ENCODE measurements at regions of chr7 and their contacts with region 1.

Region 1: GRCh38 chr7:636396-636795 is 90.1 kb upstream of the DNAAF5 start:
- DNase-seq: peak in 1 of 2 donors; percentile 26
- ATAC-seq: peak in 5 of 8 donors; percentile 53 to 70 (median 59)
- H3K4me3 ChIP-seq: no peak overlapping the region
- H3K27ac ChIP-seq: no peak overlapping the region
- H3K4me1 ChIP-seq: no peaks in the 10 kb centered on the region
- H3K27me3 ChIP-seq: no peaks in the 10 kb centered on the region
- CTCF ChIP-seq: peak in 8 of 9 donors; percentile 20 to 60 (median 51)

Region 2: DNA sequence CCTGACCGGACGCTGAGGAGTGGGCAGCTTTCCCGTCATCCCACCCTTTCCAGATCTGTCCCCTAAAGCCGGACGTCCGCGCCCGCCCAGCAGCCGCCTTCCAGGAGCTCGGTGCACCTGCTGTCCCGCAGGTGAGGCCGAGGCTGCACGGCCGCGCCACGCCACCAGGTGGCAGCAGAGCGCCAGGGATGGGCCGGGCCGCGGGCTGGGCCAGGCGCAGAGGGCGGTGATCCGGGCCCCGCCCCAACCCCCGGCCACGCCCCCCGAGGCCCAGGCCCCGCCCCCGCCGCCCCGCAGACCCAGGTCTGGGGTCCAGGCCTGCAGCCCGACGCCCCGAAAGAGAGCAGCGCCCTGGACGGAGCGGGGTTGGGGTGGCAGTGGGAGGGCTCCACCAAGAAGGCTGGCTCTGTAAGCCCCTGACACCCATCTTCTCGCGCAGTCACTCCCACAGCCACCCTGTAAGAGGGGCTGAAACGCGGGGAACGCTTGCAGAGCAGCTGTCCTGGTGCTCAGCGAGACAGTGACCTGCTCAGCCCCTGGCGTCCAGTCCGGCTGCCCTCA is 314.2 kb before region 1 on chr7:
- intact Hi-C with region 1: loop called in 2 of 10 experiments (anchors 5 kb)
- DNase-seq: peak; percentile 48 to 79
- ATAC-seq: peak; percentile 65 to 90 (median 80)
- H3K4me3 ChIP-seq: peak overlapping the region in 1 of 10 donors; percentile 20
- H3K27ac ChIP-seq: no peak overlapping the region
- H3K4me1 ChIP-seq: peaks cover 0 to 33% (median 5%) of the 10 kb centered on the region in 9 donors
- H3K27me3 ChIP-seq: peaks cover 0 to 25% (median 15%) of the 10 kb centered on the region in 7 donors
- CTCF ChIP-seq: peak; percentile 84 to 98 (median 95)

Region 3: GRCh38 chr7:332646-333392 is 303.6 kb before region 1 on chr7:
- intact Hi-C with region 1: loop called in 6 of 10 experiments (anchors 5 kb)
- DNase-seq: peak; percentile 75 to 86
- ATAC-seq: peak; percentile 86 to 94 (median 90)
- H3K4me3 ChIP-seq: peak overlapping the region in 9 of 10 donors; percentile 37 to 56 (median 50)
- H3K27ac ChIP-seq: peak overlapping the region; percentile 24 to 85 (median 76)
- H3K4me1 ChIP-seq: peaks cover 4 to 17% (median 12%) of the 10 kb centered on the region in 9 donors
- H3K27me3 ChIP-seq: peaks cover 0 to 15% (median 4%) of the 10 kb centered on the region in 7 donors
- CTCF ChIP-seq: peak; percentile 78 to 95 (median 91)